ENCODE measurements at regions of chr3 and their contacts with region 1.

Region 1: DNA sequence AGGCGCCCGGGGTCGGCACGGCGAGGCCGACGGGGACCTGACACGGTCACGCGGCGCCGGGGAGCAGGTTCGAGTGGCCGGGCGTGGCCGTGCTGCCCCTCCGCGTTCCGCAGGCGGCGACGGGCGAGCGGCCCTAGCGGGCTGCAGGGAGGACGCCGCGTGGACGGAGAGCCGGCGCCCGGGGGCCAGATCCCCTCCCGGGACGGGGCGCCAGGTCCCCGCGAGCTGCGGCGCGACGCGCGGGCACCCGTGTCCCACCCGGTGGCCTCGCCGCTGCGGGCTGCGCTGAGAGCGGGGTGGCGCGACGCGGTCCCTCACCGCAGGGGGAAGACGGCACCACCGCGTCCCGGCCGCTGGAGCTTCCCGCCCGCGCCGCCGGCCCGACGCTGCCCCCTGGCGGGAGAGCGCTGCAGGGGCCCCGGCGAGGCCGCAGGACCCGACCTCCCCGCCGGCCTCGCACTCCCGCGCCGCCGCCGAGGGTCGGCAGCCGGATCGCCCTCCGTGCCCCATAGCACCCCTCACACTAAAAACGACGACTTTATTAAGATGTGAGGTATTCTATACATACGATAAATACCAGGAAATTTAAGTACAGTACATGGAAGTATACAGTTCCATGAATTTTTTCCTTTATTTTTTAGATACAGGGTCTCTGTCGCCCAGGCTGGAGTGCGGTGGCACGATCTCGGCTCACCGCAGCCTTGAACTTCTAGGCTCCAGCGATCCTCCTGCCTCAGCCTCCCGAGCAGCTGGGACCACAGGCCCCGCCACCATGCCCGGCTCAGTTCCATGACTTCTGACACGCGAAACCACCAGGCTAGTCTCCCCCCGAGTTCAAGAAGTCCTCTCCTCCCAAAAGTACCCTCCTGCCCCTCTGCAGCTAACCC is 1.3 kb upstream of the PIGZ start:
- DNase-seq: no peak
- H3K4me3 ChIP-seq: peak overlapping the region; percentile 60
- CTCF ChIP-seq: peak; percentile 73

Region 2: DNA sequence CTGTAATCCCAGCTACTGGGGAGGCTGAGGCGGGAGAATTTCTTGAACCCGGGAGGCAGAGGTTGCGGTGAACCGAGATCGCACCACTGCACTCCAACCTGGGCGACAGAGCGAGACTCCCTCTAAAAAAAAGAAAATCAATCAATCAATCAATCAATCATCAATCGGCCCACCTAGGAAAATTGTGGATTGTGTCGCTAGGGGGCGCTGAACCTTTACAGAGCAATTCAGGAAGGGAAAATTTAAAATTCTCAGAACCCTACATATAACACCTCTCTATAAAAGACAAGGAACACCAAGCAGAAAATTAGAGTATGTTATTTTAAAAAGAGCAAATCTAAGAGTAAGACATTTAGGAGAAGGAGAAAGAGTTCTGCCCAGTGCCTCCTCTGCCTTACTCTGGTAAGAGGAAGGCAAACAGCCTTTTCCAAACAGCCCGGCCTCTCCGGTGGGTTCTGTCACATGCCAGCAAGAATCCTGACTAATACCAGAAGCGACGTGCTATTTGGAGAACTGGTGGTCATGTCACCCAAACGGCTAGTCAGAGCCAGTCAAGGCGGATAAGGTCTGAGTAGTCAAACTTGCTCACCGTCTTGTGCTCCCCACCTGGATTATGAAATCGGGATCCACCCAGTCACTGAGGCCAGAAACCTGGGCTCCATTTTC is 432.5 kb before region 1 on chr3:
- CTCF ChIA-PET with region 1: no interaction called
- POLR2A ChIA-PET with region 1: no interaction called
- DNase-seq: no peak
- H3K4me3 ChIP-seq: no peak overlapping the region
- CTCF ChIP-seq: peak; percentile 29

Region 3: GRCh38 chr3:196954832-196955231 is 15.1 kb before region 1 on chr3:
- CTCF ChIA-PET with region 1: interaction called, 14 read pairs
- POLR2A ChIA-PET with region 1: no interaction called
- DNase-seq: no peak
- H3K4me3 ChIP-seq: no peak overlapping the region
- CTCF ChIP-seq: no peak

Region 4: GRCh38 chr3:197002701-197003454 is 33.0 kb after region 1 on chr3:
- CTCF ChIA-PET with region 1: no interaction called
- POLR2A ChIA-PET with region 1: no interaction called
- DNase-seq: no peak
- H3K4me3 ChIP-seq: peak overlapping the region; percentile 62
- CTCF ChIP-seq: peak; percentile 82

Measured in AG04449 (cell line).